Activated T-helper 1 cell treated with anti-CD3 and anti-CD28 coated beads, Interleukin-12 subunit alpha, Interleukin-12 subunit beta, Interleukin-2, Interleukin-4 antibody, amounts not matched to agents 30 ng/mL and 10 ng/mL and 1 ng/mL, durations not matched to agents 14 hours and 24 hours and 36 hours (primary cell): ENCODE measurements at regions of chrX and their contacts with region 1.

Region 1: GRCh38 chrX:153971450-153972367 is at the start of gene HCFC1:
- DNase-seq: peak; percentile 87
- H3K4me3 Mint-ChIP-seq: peak within 1 kb of the TSS; percentile 100
- H3K27ac Mint-ChIP-seq: peak within 1 kb of the TSS; percentile 100
- H3K4me1 Mint-ChIP-seq: peaks cover 37% of the 10 kb centered on the region
- H3K27me3 Mint-ChIP-seq: no peaks in the 10 kb centered on the region
- total RNA-seq, gene HCFC1: 105 and 106 TPM in 2 replicates

Region 2: DNA sequence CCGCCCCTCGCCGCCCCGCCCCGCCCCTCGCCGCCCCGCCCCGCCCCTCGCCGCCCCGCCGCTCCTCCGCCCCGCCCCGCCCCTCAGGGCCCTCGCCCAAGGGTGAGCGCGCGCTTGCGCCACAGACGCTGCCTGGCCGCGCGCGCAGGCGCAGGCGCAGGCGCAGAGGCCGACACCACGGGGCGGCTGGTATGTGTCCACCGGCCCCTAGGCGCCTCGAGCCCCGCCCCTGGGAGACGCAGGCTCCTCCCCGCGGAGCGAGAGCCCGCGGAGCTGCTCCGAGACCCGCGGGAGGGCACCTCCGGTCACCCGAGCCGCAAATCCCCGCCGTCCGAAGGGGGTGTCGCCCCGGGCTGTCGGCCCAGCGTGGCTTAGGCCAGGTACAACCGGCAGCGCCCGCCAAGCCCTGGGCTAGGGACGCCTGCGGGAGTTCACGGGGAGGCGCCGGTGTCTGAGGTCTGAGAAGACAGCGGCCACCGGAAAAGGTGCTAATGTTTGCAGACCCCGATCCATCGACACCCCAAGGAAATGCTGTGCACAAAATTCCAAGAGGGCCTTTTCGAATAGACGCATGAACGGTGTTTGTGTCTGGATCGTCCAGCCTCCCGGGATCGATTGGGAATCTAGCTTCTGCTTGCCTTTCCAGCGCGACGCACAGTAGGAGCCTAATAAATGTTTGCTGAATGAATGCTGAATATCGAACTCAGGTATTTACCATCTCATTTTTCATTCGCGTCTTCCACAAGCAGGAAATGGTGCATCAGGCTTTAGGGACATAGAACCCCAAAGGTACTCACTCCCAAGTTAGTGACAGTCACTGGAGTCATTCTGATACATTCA is 372.3 kb before region 1 on chrX:
- intact Hi-C with region 1: loop called (anchors 2 kb)
- DNase-seq: peak; percentile 87
- H3K4me3 Mint-ChIP-seq: peak overlapping the region; percentile 89
- H3K27ac Mint-ChIP-seq: peak overlapping the region; percentile 59
- H3K4me1 Mint-ChIP-seq: peaks cover 30% of the 10 kb centered on the region
- H3K27me3 Mint-ChIP-seq: peaks cover 1% of the 10 kb centered on the region

Region 3: DNA sequence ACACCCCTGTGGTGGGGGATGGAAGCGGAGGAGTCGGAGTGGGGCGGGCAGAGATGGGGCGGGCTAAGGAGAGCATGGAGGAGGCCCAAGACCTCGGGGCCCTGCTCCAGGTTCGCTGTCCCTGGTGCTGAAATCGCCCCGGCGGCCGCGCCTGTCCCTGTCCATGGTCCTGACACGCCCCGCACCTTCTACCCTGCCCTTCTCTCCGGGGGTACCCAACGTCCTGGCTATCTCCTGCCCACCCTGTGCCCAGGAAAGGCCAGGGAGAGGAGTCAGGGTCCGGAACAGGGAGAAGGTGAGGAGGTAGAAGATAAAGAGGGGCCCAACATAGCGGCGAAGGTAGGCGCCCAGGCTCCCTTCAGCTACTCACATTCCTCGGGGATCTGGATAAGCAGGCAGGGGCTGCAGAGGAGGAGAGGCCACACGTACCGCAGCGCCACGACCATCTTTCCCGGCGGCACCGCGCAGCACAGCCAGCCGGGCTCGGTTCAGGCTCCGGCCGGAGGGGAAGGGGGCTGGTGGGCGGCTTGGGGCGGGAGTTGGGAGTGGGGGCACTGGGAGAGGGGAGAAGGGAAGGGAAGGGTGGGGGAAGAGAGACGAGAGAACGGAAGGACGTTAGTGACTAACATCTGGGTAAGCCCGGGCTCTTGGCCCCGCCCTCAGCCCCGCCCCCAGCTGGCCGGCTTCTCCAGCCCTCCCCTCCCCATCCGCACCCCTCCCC is 96.2 kb before region 1 on chrX:
- intact Hi-C with region 1: loop called (anchors 1 kb)
- DNase-seq: peak; percentile 54
- H3K4me3 Mint-ChIP-seq: no peak overlapping the region
- H3K27ac Mint-ChIP-seq: no peak overlapping the region
- H3K4me1 Mint-ChIP-seq: peaks cover 24% of the 10 kb centered on the region
- H3K27me3 Mint-ChIP-seq: peaks cover 5% of the 10 kb centered on the region

Region 4: DNA sequence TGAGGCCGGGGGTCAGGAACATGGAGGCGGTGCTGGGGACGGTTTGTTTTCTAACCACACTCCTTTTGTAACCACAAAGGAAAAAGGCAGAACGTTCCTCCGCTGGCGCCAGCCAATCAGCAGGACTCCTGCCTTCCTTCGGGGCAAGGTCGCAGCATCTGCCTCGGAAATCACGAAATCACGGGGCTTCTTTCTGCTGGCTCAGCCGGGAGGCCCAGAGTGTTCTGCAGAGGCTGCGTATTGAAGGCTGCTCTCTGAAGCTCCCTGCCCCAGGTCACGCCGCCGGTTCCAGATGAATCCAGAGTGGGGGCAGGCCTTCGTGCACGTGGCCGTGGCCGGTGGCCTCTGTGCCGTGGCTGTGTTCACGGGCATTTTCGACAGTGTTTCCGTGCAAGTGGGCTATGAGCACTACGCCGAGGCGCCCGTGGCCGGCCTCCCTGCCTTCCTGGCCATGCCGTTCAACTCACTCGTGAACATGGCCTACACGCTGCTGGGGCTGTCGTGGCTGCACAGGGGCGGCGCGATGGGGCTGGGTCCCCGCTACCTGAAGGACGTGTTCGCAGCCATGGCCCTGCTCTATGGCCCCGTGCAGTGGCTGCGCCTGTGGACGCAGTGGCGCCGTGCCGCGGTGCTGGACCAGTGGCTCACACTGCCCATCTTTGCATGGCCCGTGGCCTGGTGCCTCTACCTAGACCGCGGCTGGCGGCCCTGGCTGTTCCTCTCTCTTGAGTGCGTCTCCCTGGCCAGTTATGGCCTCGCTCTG is 10.2 kb after region 1 on chrX:
- intact Hi-C with region 1: loop called (anchors 1 kb)
- DNase-seq: peak; percentile 62
- H3K4me3 Mint-ChIP-seq: peak overlapping the region; percentile 73
- H3K27ac Mint-ChIP-seq: peak overlapping the region; percentile 90
- H3K4me1 Mint-ChIP-seq: peaks cover 38% of the 10 kb centered on the region
- H3K27me3 Mint-ChIP-seq: no peaks in the 10 kb centered on the region

Region 5: DNA sequence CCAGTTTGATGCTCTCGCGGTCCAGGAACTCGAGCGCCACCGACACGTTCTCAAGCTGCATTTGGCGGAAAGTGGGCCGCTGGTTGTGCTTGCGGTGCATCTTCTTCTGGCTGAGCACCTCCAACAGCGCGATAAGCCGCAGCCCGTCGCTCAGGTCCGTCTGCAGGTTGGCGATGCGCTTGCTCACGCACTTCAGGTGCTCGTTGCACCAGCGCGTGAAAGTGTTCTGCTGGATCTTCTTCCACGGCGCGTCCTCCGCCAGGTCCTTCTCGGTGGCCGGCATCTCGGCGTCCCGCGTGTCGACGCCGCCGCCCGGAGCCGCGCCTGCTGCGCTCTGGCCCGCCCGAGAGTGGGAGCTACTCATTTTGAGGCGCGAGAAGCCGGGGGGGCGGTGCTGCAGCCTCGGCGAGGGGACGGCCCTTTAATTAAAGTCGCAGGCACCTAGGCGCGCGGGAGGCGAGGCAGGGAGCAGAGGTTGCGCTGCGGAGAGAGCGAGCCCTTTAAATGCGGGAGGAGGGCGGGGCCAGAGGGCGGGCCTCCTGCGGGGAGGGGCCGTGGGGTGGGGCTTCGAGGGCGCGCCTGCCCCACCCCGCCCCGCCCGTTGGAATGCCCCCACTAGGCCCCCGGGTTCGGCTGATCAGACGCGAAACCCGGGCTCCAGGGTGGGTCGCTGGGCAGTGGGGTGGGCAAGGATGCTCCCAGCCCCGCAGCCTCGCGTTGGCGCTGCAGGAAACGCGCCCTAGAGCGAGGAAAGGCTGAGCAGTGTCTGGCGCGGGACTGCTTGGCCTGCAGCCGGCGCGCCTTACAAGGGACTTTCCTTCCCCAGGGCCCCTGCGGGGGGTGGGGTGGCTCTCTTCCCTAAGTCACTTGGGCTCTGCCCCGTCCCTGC is 399.4 kb after region 1 on chrX:
- intact Hi-C with region 1: loop called (anchors 2 kb)
- DNase-seq: peak; percentile 88
- H3K4me3 Mint-ChIP-seq: peak overlapping the region; percentile 84
- H3K27ac Mint-ChIP-seq: peak overlapping the region; percentile 63
- H3K4me1 Mint-ChIP-seq: peaks cover 11% of the 10 kb centered on the region
- H3K27me3 Mint-ChIP-seq: no peaks in the 10 kb centered on the region

Region 6: DNA sequence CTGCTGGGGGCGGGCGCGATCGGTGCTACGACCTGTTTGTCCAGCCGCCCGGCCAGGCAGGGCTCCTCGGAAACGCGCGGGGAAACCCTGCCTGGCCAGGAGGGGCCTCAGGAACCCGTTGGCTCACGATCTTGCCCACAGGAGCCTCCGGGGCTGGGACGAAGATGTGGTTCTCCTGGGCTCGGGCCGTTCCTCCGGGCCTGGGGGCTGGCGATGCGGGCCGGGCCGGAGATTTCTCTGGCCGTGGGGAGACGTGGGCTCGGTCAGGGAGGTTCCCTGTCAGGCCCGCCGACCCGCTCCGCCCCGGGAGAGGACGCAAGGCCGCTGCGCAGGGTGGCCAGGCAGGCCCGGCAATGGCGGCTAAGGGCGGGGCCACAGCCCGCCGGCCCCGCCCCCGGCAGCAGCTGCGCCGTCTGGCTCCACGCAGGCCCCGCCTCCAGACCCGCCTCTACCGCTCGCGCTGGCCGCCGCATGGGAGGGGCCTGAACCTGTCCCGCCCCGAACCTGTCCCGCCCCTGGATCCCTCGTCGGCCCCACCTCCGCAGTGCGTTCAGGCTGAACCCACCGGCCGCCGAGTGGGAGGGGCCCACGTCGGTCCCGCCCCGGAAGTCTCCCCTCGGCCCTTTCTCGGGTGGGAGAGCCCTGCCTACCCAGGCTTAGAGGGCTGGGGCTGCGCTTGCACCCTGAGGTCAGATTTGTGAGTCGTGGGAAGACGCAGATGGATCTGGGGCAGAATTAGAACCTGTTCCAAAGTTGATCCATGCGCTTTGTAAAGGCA is 544.4 kb after region 1 on chrX and contains the start of gene FAM3A:
- intact Hi-C with region 1: loop called (anchors 10 kb)
- DNase-seq: peak; percentile 87
- H3K4me3 Mint-ChIP-seq: peak within 1 kb of the TSS; percentile 87
- H3K27ac Mint-ChIP-seq: peak within 1 kb of the TSS; percentile 91
- H3K4me1 Mint-ChIP-seq: peaks cover 29% of the 10 kb centered on the region
- H3K27me3 Mint-ChIP-seq: no peaks in the 10 kb centered on the region
- total RNA-seq, gene FAM3A: 35.9 and 40.1 TPM in 2 replicates